GM10248 (cell line): ENCODE measurements at regions of chr5 and their contacts with region 1.

Region 1: GRCh38 chr5:10775646-10776045 is 14.6 kb upstream of the DAP start:
- DNase-seq: peak; percentile 28
- CTCF ChIP-seq: peak; percentile 32

Region 2: DNA sequence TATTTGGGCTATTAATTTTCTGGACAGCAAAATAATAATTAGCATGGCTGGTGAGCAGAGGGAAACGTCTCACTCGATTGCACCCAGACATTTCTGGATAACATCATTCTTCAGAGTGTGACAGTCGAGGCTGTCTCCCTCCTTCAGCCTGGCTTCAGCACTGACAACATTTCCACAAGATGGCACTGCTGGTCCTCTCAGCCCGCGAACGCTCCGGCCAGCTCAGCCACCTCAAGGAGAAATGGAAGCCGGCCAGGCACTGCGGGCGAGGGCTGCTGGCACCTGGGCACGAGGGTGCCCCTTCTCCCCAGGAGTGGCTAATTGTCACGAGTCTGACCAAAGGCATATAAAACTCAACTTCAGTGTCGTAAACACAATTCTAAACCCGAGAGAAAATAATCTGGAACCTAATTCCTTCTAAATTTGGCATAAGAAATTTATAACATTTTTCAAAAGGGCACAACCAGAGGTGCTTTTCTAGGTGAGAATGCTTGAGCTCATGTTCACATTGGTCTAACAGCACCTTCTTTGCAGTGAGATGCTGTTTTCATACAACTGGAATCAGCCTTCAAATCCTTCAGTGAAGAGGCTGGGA is 80.5 kb before region 1 on chr5:
- CTCF ChIA-PET with region 1: interaction called, 12 read pairs
- POLR2A ChIA-PET with region 1: no interaction called
- DNase-seq: peak; percentile 69
- CTCF ChIP-seq: peak; percentile 87

Region 3: DNA sequence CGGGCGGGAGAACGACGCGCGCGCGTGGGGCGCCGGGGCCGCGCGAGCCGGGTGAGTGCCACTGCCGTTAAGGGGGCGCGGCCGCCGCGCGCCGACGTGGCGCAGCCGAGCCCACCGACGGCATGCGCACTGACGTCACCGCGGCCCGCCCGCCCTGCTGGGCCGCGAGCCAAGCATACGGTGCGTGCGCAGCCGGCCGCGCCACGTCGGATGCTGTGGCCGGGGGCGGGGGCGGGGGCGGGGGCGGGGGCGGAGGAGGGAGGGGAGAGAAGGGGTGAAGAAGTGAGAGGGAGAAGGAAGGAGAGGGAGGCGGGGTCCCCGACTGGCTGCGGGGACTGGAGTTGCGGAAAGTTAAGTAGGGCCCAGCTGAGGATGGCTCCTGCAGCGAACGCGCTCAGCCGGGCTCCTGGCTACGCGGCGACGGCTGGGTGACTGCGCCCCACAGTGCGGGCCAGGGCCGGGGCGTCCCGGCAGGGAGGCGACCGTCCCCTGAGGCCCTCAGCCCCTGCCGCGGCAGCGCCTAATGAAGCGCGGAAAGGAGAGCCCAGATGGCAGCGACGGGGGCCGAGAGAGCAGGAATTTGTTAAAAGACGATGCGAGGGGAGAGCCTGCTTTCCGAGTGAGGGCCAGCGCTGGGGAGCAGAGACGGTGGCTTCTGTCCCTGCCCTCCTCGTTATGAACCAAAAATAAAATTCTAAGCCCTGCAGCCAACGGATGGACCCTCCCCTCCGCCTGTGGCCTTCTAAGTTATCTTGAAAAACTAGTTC is 14.3 kb before region 1 on chr5 and contains the start of gene DAP:
- CTCF ChIA-PET with region 1: no interaction called
- POLR2A ChIA-PET with region 1: no interaction called
- DNase-seq: peak; percentile 93
- CTCF ChIP-seq: no peak